Heart right ventricle (tissue), 16 donors: ENCODE measurements at regions of chr2 and their contacts with region 1.

Region 1: GRCh38 chr2:71798266-71799012 is 345.1 kb downstream of the DYSF start:
- DNase-seq: peak; percentile 26 to 38
- ATAC-seq: peak in 5 of 8 donors; percentile 54 to 67 (median 57)
- H3K4me3 ChIP-seq: no peak overlapping the region
- H3K27ac ChIP-seq: no peak overlapping the region
- H3K4me1 ChIP-seq: peaks cover 0 to 20% (median 6%) of the 10 kb centered on the region in 9 donors
- H3K27me3 ChIP-seq: no peaks in the 10 kb centered on the region
- CTCF ChIP-seq: peak; percentile 68 to 83 (median 75)

Region 2: DNA sequence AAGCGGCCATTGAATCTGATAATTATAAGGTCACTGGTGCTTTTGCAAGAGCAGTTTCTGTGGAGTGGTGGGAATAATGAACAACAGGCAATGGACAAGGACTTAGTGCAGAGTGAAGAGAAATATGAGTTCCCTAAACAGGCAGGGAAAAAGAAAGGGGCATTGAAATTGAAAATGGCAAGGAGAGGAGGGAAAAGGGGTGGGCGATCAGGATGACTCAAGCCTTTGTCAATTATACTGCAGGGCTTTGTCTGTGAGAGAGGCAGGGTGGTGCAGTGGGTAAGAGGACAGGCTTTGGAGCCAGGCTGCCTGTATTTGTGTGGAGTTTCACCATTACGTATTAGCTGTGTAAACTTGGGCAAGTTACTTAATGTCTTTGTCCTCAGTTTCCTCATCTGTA is 542.0 kb before region 1 on chr2:
- intact Hi-C with region 1: no loop called
- DNase-seq: no peak
- ATAC-seq: no peak
- H3K4me3 ChIP-seq: no peak overlapping the region
- H3K27ac ChIP-seq: no peak overlapping the region
- H3K4me1 ChIP-seq: peaks cover 0 to 24% (median 5%) of the 10 kb centered on the region in 9 donors
- H3K27me3 ChIP-seq: peaks cover 0 to 5% (median 0%) of the 10 kb centered on the region in 7 donors
- CTCF ChIP-seq: no peak

Region 3: GRCh38 chr2:71558300-71559051 is 240.0 kb before region 1 on chr2:
- intact Hi-C with region 1: loop called in 1 of 10 experiments (anchors 10 kb)
- DNase-seq: no peak
- ATAC-seq: peak in 1 of 8 donors; percentile 30
- H3K4me3 ChIP-seq: no peak overlapping the region
- H3K27ac ChIP-seq: peak overlapping the region in 1 of 10 donors; percentile 26
- H3K4me1 ChIP-seq: no peaks in the 10 kb centered on the region
- H3K27me3 ChIP-seq: no peaks in the 10 kb centered on the region
- CTCF ChIP-seq: no peak

Region 4: GRCh38 chr2:71614976-71615766 is 183.3 kb before region 1 on chr2:
- intact Hi-C with region 1: loop called in 6 of 10 experiments (anchors 2 to 10 kb)
- DNase-seq: peak; percentile 91
- ATAC-seq: peak; percentile 91 to 96 (median 94)
- H3K4me3 ChIP-seq: no peak overlapping the region
- H3K27ac ChIP-seq: peak overlapping the region; percentile 76 to 95 (median 90)
- H3K4me1 ChIP-seq: peaks cover 26 to 54% (median 43%) of the 10 kb centered on the region in 9 donors
- H3K27me3 ChIP-seq: no peaks in the 10 kb centered on the region
- CTCF ChIP-seq: no peak

Region 5: DNA sequence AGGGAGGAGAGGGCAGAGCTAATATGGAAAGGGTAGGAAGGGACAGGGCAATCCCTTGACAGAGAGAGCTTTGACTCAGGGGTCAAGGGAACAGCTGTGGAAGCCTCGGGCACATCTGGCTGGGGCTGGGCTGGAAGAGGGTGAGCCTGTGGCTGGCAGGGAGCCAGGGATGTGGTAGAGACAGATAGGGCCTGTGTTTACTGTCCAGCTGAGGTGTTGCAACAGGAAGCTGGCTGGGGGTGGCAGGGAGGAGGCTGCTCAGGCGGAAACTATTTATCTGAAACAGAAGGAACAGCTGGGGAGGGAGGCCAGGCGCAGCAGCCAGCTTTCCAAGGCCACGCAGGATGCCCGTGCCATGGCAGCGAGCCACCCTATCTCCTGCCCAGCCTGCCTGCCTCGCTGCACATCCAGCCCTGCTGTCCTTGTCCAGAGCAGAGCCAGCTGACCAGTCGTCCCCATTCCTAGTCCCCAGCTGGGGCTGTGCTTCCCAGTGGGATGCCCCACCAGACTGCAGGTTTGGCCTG is 84.6 kb after region 1 on chr2:
- intact Hi-C with region 1: loop called in 2 of 10 experiments (anchors 10 kb)
- DNase-seq: peak; percentile 73 to 82
- ATAC-seq: peak; percentile 81 to 94 (median 90)
- H3K4me3 ChIP-seq: no peak overlapping the region
- H3K27ac ChIP-seq: peak overlapping the region in 5 of 10 donors; percentile 7 to 47 (median 16)
- H3K4me1 ChIP-seq: peaks cover 0 to 40% (median 25%) of the 10 kb centered on the region in 9 donors
- H3K27me3 ChIP-seq: no peaks in the 10 kb centered on the region
- CTCF ChIP-seq: no peak

Region 6: GRCh38 chr2:71933467-71934319 is 135.3 kb after region 1 on chr2:
- intact Hi-C with region 1: loop called in 2 of 10 experiments (anchors 10 kb)
- DNase-seq: no peak
- ATAC-seq: no peak
- H3K4me3 ChIP-seq: no peak overlapping the region
- H3K27ac ChIP-seq: no peak overlapping the region
- H3K4me1 ChIP-seq: peaks cover 0 to 14% (median 0%) of the 10 kb centered on the region in 9 donors
- H3K27me3 ChIP-seq: peaks cover 0 to 4% (median 0%) of the 10 kb centered on the region in 7 donors
- CTCF ChIP-seq: peak in 4 of 9 donors; percentile 5 to 32 (median 20)

Region 7: DNA sequence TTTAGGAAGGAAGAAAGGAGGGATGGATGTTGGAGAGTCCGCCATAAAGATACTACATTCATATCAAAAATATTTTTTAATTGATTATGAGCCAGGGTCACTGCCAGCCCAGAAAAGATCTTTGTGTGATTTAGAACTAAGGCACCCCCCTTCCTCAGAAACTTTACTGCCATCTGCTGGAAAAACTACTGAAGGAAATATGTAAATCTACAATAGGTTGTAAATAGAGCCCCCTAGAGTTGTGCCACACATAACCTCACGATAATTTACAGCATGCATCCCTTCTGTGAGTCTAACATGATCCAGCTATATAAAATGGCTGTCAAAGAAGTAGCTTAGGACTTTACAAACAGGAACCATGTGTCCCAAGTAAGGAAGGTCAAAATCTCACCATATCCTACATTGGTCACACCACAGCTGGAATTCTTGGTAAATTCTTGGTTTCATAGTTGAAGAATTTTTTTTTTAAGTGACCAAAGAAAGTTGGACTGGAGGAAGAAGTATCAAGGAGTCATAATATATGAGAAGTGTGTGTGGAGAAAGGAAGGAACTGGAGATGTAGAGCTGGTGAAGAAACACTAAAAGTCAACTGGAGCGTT is 196.7 kb after region 1 on chr2:
- intact Hi-C with region 1: loop called in 5 of 10 experiments (anchors 5 to 10 kb)
- DNase-seq: no peak
- ATAC-seq: no peak
- H3K4me3 ChIP-seq: no peak overlapping the region
- H3K27ac ChIP-seq: no peak overlapping the region
- H3K4me1 ChIP-seq: no peaks in the 10 kb centered on the region
- H3K27me3 ChIP-seq: peaks cover 0 to 22% (median 6%) of the 10 kb centered on the region in 7 donors
- CTCF ChIP-seq: peak in 8 of 9 donors; percentile 12 to 52 (median 44)

Region 8: GRCh38 chr2:72579591-72580180 is 781.2 kb after region 1 on chr2:
- intact Hi-C with region 1: loop called in 1 of 10 experiments (anchors 10 kb)
- DNase-seq: no peak
- ATAC-seq: peak in 4 of 8 donors; percentile 11 to 59 (median 30)
- H3K4me3 ChIP-seq: no peak overlapping the region
- H3K27ac ChIP-seq: no peak overlapping the region
- H3K4me1 ChIP-seq: peaks cover 0 to 39% (median 11%) of the 10 kb centered on the region in 9 donors
- H3K27me3 ChIP-seq: no peaks in the 10 kb centered on the region
- CTCF ChIP-seq: peak; percentile 53 to 83 (median 67)